Ascending aorta (tissue), 2 donors: ENCODE measurements at regions of chr6 and their contacts with region 1.

Region 1: DNA sequence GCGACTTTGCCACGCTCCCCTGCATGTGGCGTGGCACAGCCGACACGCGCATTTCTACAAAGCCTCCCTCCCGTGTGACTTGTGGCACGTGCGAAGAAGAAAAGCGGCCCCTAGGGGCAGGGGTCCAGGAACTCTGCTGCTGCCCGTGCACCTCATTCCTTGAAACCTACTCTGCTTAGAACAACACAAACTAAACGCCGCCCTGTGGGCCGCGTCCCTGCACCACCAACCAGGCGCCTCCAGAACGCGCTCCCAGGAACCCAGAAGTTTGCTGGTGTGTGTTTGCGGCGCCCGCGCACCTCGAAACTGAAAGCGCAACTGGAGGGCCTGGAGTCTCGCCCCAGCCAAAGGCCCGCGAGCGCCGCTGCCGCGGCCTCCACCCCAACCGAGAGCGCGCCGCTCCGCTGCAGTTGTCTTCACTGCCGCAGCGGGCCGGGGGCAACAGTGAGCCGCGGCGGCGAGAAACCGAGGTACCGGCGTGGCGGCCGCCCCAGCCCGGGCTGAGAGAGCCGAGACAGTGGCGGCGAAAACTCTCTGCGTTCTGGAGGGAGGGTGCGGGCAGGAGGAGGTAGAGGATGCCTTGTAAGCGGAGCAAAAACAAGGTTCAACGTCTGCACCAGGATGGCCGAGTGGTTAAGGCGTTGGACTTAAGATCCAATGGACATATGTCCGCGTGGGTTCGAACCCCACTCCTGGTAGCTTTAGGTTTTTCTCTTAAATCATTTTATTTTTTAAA is 65.8 kb downstream of the STX11 start:
- DNase-seq: peak; percentile 70 to 97
- H3K4me3 ChIP-seq: peak overlapping the region; percentile 76 to 79
- H3K27ac ChIP-seq: peak overlapping the region; percentile 88 to 93
- H3K4me1 ChIP-seq: peaks cover 0 to 10% of the 10 kb centered on the region in 2 donors
- H3K27me3 ChIP-seq: no peaks in the 10 kb centered on the region
- CTCF ChIP-seq: peak; percentile 62 to 81 (median 71)

Region 2: DNA sequence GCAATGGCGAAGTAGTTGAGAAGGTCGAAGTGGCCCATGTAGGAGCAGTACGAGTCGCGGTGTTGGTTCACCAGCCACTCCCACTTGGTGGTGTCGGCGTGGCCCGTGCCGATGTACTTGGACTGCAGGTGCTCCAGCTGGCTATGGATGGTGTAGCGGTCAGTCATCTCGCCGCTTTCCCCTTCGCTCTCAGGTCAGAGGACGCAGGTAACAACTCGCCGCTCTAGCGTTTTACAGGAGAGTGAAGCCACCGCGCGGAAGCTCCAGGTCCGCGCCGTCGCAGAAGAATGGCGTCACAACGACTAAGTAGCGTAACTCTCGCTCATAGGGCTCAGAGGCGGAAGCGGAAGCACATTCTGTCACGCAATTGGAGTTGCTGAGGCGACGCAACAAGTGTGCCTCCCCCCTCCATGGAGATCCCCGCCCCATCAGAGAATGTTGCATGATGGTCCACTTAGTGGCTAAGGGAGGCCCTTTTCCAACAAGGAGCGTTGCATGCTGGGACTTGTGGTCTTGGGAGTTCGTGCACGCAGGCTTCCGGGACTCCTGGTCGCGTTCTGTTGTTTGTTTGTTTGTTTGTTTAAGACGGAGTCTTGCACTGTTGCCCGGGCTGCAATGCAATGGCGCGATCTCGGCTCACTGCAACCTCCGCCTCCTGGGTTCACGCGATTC is 120.6 kb before region 1 on chr6 and contains the start of gene SF3B5:
- intact Hi-C with region 1: loop called (anchors 2 kb)
- DNase-seq: peak; percentile 97 to 99
- H3K4me3 ChIP-seq: peak within 1 kb of the TSS; percentile 77 to 95
- H3K27ac ChIP-seq: peak within 1 kb of the TSS; percentile 80 to 82
- H3K4me1 ChIP-seq: peaks cover 5 to 17% of the 10 kb centered on the region in 2 donors
- H3K27me3 ChIP-seq: no peaks in the 10 kb centered on the region
- CTCF ChIP-seq: no peak
- total RNA-seq, gene SF3B5: 123 TPM

Region 3: DNA sequence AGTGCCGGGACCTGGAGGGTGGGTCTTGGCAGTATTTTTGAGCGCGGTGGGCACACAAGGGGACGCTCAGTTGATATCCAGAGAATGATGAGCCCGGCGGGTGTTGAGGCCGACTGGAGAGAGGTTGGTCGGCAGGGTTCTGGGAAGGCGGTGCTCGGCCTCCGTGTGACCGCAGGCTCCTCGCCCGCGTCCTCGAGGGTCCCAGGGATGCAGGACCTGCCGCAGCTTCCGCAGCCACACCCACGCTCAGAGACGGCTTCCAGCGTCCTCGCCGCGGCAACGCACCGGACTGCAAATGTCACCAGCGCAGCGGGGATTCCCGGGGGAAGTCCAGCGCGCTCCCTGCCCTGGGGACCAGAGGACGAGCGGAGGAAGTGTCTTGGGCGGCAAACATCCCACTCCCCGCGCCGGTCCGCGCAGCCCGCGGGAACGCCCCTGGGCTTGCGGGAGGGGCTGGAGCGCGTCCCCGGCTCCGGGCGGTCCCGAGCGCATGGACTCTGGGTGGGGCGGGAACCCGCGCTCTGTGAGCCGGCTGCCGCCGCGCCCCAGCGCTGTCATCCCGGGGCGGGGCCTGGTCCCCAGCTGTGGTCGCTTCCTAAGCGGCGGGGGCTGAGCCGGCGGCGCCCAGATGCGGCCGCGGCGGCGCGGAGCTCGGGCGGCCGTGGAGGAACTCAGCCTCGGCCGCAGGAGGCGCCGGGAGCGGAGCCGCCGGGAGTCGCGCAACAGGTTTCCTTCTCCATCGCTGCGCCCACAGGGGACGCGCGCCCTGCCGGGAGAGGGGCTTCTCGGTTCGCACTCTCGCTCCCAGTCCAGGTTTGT is 66.0 kb before region 1 on chr6 and contains the start of gene STX11:
- intact Hi-C with region 1: loop called (anchors 5 kb)
- DNase-seq: peak; percentile 29 to 82
- H3K4me3 ChIP-seq: peak within 1 kb of the TSS; percentile 68 to 80
- H3K27ac ChIP-seq: peak within 1 kb of the TSS; percentile 19 to 47
- H3K4me1 ChIP-seq: peaks cover 0 to 4% of the 10 kb centered on the region in 2 donors
- H3K27me3 ChIP-seq: no peaks in the 10 kb centered on the region
- CTCF ChIP-seq: no peak
- total RNA-seq, gene STX11: 29.5 TPM

Region 4: DNA sequence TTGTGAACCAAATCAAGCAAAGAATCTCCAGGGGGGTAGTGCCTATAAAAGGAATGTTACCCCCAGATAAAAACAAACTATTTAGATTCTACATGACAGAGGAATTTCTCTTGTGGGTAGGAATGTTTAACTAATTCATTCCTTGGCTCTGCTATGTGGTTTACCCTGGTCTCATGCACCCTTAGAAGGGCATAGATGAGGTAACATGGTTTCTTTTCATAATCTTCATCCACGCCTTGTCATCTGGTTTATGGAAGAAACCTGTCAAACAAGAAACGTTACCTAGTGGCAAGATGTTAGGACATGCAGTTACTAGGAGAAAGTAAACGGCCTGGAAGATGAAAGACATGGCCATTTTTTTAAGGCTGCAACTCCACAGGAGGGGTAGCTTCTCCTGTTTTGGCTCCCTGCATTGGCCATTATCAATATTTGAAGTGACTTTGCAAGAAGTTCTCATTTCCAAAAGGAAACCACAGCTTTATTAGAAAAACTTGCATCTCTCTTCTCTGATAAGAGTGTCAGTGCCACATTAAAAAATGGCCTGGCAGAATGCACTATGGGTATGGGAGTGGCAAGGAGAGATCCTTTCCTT is 20.3 kb before region 1 on chr6:
- intact Hi-C with region 1: no loop called
- DNase-seq: no peak
- H3K4me3 ChIP-seq: no peak overlapping the region
- H3K27ac ChIP-seq: no peak overlapping the region
- H3K4me1 ChIP-seq: peaks cover 0 to 1% of the 10 kb centered on the region in 2 donors
- H3K27me3 ChIP-seq: no peaks in the 10 kb centered on the region
- CTCF ChIP-seq: no peak

Region 5: DNA sequence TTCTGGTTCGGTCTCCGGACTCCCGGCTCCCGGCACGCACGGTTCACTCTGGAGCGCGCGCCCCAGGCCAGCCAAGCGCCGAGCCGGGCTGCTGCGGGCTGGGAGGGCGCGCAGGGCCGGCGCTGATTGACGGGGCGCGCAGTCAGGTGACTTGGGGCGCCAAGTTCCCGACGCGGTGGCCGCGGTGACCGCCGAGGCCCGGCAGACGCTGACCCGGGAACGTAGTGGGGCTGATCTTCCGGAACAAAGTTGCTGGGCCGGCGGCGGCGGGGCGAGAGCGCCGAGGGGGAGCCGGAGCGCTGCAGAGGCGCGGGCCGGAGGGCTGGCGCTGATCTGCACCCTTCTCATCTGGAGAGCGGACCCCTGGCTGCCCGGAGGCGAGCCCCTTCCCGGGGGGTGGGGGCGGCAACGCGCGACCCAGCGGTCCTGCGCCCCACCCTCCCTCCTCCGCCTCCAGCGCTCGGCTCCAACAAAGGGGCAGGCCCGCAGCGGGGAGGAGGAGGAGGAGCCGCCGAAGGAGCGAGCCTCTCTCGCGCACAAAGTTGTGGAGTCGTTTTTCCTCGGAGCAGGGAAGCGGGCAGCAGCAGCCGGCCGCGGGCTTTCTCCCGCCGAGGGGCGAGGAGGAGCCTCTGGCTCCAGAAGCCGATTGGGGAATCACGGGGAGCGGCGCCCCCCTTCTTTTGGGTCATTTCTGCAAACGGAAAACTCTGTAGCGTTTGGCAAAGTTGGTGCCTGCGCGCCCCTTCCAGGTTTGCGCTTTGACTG is 68.9 kb after region 1 on chr6 and contains the start of gene UTRN:
- intact Hi-C with region 1: loop called (anchors 1 kb)
- DNase-seq: peak; percentile 20 to 88
- H3K4me3 ChIP-seq: peak within 1 kb of the TSS; percentile 75 to 98
- H3K27ac ChIP-seq: peak within 1 kb of the TSS; percentile 98 to 99
- H3K4me1 ChIP-seq: peaks cover 0 to 8% of the 10 kb centered on the region in 2 donors
- H3K27me3 ChIP-seq: no peaks in the 10 kb centered on the region
- CTCF ChIP-seq: no peak
- total RNA-seq, gene UTRN: 69.9 TPM

Region 6: GRCh38 chr6:144434308-144434990 is 218.3 kb after region 1 on chr6:
- intact Hi-C with region 1: loop called (anchors 2 kb)
- DNase-seq: no peak
- H3K4me3 ChIP-seq: no peak overlapping the region
- H3K27ac ChIP-seq: peak overlapping the region in 1 of 2 donors; percentile 62
- H3K4me1 ChIP-seq: peaks cover 0 to 4% of the 10 kb centered on the region in 2 donors
- H3K27me3 ChIP-seq: no peaks in the 10 kb centered on the region
- CTCF ChIP-seq: no peak

Region 7: GRCh38 chr6:145734486-145735355 is 1518.6 kb after region 1 on chr6:
- intact Hi-C with region 1: loop called (anchors 5 kb)
- DNase-seq: peak; percentile 65 to 94
- H3K4me3 ChIP-seq: peak overlapping the region; percentile 59 to 82
- H3K27ac ChIP-seq: peak overlapping the region; percentile 96 to 97
- H3K4me1 ChIP-seq: peaks cover 0 to 8% of the 10 kb centered on the region in 2 donors
- H3K27me3 ChIP-seq: no peaks in the 10 kb centered on the region
- CTCF ChIP-seq: no peak